A673 (cell line): ENCODE measurements at regions of chr1 and their contacts with region 1.

Region 1: DNA sequence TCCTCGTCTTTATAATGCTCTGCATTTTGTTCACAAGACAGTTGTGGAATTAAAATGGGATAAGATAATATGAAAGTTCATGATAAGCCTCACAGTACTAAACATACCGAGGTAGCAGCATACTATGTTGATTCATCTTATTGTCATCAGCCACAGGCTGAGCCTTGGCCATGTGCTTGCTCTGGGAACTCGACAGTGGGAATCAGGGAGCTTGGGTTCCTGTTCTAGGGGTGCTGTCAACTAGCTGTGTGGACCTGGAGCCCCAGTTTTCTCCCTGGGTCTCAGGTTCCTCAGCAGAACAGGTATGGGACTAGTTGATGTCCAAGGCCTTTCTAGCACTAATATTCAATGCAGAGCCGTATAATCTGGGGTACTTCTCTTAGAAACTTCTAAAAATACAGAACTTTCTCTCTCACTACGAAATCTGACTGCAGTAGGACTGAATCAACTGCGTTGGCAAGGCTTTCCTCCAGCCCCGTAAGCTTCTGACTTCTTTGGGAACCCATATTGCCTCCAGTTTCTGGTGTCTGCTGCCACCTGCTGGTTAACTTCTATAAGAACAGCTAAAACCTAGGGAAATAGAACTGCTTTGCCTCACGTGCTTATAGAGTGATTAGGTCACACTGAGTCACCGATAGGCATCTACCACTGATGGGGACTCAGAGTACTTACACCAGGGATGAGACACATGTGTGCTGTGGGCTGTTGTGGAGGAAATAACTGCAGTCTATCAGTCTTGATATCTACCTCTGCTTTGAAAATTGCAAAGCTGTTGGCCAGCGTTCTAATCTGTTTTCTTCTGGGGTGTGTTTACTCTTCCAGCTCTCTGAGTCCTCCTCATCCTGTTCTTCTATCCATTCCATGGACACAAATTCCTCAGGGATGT is 110.9 kb downstream of the RGL1 start:
- DNase-seq: peak; percentile 97
- H3K4me3 ChIP-seq: peak overlapping the region; percentile 6
- H3K27ac ChIP-seq: peak overlapping the region; percentile 95
- H3K4me1 ChIP-seq: peaks cover 56% of the 10 kb centered on the region
- H3K27me3 ChIP-seq: no peaks in the 10 kb centered on the region
- CTCF ChIP-seq: peak; percentile 90

Region 2: GRCh38 chr1:183609313-183609712 is 306.6 kb before region 1 on chr1:
- CTCF ChIA-PET with region 1: interaction called, 16 read pairs
- POLR2A ChIA-PET with region 1: no interaction called
- intact Hi-C with region 1: loop called (anchors 2 kb)
- DNase-seq: peak; percentile 83
- H3K4me3 ChIP-seq: no peak overlapping the region
- H3K27ac ChIP-seq: no peak overlapping the region
- H3K4me1 ChIP-seq: peaks cover 9% of the 10 kb centered on the region
- H3K27me3 ChIP-seq: no peaks in the 10 kb centered on the region
- CTCF ChIP-seq: peak; percentile 72

Region 3: DNA sequence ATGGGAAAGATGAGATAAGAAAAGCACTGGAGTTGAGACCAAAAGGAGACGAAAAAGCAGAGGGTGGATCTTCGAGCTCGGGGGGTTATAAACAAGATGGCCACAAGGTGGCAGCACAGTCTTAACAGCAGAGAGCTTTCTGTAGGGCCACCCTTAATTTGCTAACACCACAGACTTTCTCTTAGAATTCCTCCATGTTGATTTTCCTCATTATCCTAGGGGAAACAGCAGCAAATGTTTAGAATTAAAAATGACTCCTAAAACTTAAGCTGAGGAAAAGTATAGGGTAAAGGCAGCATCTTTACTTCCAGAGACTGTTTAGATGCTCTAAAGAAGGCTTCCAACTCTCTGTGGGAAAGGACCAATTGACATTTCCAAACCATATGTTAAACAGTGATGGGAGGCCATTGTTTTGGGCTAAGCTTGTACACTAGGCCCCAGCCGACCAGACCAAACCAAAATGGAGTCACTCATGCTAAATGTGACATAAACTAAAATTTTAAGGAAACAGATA is 260.2 kb before region 1 on chr1:
- CTCF ChIA-PET with region 1: interaction called, 48 read pairs
- POLR2A ChIA-PET with region 1: no interaction called
- intact Hi-C with region 1: loop called (anchors 1 kb)
- DNase-seq: peak; percentile 93
- H3K4me3 ChIP-seq: no peak overlapping the region
- H3K27ac ChIP-seq: peak overlapping the region; percentile 50
- H3K4me1 ChIP-seq: peaks cover 42% of the 10 kb centered on the region
- H3K27me3 ChIP-seq: no peaks in the 10 kb centered on the region
- CTCF ChIP-seq: peak; percentile 95

Region 4: DNA sequence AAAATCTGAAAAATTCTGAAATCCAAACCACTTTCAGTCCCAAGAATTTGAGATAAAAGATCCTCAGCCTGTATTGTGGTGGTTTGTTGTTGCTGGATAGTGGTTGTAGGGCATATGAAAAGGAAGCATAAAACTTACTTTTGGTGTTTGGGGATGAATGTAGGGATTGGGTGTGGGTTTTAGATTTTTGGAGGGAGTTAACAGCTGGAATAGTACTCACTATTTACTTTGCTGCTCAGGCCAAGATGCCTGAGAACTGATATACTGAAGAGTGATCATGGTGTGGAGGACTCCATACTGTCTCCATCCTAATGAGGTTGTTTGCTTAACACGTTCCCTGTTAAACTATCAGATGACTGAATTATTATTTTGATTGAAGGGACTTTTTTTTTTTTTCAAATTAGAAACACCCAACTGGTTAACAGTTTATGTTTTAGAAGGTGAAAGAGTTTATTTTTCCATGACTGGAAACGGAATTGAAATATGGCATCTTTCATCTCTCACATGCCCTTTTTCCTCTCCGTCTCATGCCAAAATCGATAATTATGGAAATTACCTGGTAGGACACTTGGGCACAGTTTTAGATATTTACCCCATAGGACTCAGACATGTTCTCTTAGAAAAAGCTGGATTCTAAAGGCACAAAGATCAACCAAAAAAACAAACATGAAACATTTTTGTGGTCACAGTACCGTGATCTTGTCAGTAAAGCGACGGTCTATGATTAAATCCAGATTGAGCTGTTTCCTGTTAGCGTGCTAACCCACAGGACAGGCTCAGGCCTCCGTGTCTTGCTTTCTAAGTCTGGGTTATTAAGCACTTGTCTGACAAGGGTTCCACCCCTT is 73.7 kb before region 1 on chr1:
- CTCF ChIA-PET with region 1: interaction called, 3 read pairs
- POLR2A ChIA-PET with region 1: no interaction called
- intact Hi-C with region 1: loop called (anchors 5 kb)
- DNase-seq: peak; percentile 96
- H3K4me3 ChIP-seq: peak overlapping the region; percentile 29
- H3K27ac ChIP-seq: peak overlapping the region; percentile 97
- H3K4me1 ChIP-seq: peaks cover 67% of the 10 kb centered on the region
- H3K27me3 ChIP-seq: no peaks in the 10 kb centered on the region
- CTCF ChIP-seq: no peak